A673 (cell line): ENCODE measurements at regions of chr10 and their contacts with region 1.

Region 1: GRCh38 chr10:72319416-72320254 is 35.1 kb downstream of the DNAJB12 start:
- DNase-seq: peak; percentile 93
- H3K4me3 ChIP-seq: peak overlapping the region; percentile 45
- H3K27ac ChIP-seq: peak overlapping the region; percentile 96
- H3K4me1 ChIP-seq: peaks cover 46% of the 10 kb centered on the region
- H3K27me3 ChIP-seq: no peaks in the 10 kb centered on the region
- CTCF ChIP-seq: no peak

Region 2: DNA sequence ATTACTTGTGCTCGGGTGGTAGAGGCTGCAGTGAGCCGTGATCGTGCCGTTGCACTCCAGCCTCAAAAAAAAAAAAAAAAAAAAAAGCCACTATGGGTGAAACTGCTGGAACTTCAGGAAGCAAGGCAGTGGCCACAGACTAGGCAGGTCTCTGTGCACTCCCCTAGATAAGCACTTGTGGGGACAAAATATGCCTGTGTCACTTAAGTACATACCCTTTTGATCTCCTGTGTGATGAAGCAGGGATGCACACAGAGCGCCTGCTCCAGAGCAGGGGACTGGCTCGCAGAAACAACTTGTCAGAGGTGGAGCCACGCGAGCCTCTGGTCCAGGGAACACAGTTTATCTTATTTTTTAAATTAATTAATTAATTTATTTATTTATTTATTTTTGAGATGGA is 425.7 kb before region 1 on chr10:
- CTCF ChIA-PET with region 1: interaction called, 14 read pairs
- POLR2A ChIA-PET with region 1: no interaction called
- intact Hi-C with region 1: no loop called
- DNase-seq: no peak
- H3K4me3 ChIP-seq: no peak overlapping the region
- H3K27ac ChIP-seq: no peak overlapping the region
- H3K4me1 ChIP-seq: peaks cover 3% of the 10 kb centered on the region
- H3K27me3 ChIP-seq: no peaks in the 10 kb centered on the region
- CTCF ChIP-seq: no peak

Region 3: DNA sequence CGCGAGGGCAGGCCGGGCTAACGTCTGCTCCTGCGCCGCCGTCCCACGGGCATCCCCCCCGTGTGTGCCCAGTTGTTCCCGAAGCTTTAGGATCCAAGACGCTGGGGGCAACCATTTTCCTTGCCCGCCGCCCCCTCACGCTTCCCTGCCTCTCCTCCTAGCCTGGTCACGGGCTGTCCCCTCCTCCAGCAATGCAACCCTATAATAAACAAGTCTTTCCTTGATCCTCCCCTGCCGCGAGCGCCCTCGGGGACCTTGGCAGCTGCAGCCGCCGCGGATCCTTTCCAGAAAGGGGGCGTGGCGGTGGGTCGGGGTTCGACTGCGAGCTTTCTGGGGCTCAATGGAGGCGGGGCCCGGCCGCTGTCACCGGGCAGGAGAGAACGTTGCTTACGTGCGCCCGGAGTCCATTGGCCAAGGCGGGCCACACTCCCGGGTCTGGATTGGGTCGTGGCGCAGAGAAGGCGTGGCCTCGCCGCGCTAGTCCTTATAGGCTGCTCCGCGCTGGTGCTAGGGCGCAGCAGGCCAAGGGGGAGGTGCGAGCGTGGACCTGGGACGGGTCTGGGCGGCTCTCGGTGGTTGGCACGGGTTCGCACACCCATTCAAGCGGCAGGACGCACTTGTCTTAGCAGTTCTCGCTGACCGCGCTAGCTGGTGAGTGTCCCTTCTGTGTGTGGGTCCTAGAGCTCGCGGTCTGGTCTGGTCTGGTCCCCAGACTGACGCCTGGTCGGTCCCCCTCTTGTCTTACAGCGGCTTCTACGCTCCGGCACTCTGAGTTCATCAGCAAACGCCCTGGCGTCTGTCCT is 46.0 kb before region 1 on chr10 and contains the start of gene DDIT4:
- CTCF ChIA-PET with region 1: interaction called, 3 read pairs
- POLR2A ChIA-PET with region 1: interaction called, 17 read pairs
- intact Hi-C with region 1: loop called (anchors 5 kb)
- DNase-seq: peak; percentile 99
- H3K4me3 ChIP-seq: peak within 1 kb of the TSS; percentile 86
- H3K27ac ChIP-seq: peak within 1 kb of the TSS; percentile 95
- H3K4me1 ChIP-seq: peaks cover 33% of the 10 kb centered on the region
- H3K27me3 ChIP-seq: no peaks in the 10 kb centered on the region
- CTCF ChIP-seq: no peak
- total RNA-seq, gene DDIT4: 20.7 and 39.6 TPM in 2 replicates

Region 4: DNA sequence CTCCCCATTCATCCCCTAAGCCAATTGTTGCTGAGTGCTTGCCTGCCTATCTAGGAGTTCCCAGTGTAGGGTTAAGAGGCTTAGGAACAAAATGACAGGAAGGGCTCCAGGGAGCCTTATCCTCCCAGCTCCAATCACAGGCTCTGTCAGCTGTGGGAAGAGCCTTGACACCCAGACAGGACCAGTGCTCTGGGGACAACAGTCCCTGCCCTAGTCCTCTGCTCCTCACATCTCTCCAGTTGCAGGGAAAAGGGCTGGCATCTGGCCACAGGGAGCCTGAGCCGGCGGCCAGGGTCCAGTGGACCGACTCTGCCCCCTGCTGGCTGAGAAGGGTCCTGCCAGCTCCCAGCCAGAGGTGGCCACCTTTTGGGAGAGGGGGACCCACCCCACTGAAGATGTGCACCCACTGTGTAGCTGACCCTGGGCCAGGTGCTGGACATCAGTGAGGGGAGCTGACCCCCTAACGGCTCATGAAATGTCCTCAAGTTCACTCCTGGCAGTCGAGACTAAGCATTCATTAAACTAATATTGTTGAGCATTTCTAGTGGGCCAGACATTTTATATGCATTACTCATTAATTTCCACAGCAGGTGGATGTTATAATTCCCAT is 17.5 kb after region 1 on chr10:
- CTCF ChIA-PET with region 1: interaction called, 11 read pairs
- POLR2A ChIA-PET with region 1: no interaction called
- intact Hi-C with region 1: no loop called
- DNase-seq: peak; percentile 77
- H3K4me3 ChIP-seq: no peak overlapping the region
- H3K27ac ChIP-seq: peak overlapping the region; percentile 47
- H3K4me1 ChIP-seq: peaks cover 19% of the 10 kb centered on the region
- H3K27me3 ChIP-seq: no peaks in the 10 kb centered on the region
- CTCF ChIP-seq: peak; percentile 97

Region 5: DNA sequence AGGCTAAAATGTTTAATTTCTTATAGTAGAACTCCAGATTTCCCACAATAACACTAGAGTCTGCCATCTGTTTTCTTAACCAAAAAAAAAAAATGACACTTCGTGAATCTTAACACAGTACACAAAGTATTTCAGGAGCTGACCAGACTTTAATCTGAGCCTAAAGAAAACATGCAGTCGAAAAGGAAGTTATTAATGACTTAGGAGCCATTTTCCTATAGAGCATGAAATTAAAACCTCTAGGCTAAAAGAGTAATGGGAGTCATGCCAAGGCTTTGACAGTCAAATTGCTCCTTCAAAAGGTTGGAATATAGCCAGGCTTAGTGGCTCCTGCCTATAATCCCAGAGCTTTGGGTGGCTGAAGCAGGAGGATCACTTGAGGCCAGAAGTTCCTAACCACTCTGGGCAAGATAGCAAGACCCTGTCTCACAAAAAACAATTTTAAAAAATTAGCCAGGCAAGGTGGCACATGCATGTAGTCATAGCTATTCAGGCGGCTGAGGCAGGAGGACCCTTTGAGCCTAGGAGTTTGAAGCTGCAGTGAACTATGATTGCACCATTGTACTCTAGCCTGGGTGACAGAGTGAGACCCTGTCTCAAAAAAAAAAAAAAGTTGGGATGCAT is 292.7 kb after region 1 on chr10:
- CTCF ChIA-PET with region 1: no interaction called
- POLR2A ChIA-PET with region 1: no interaction called
- intact Hi-C with region 1: no loop called
- DNase-seq: peak; percentile 98
- H3K4me3 ChIP-seq: peak overlapping the region; percentile 16
- H3K27ac ChIP-seq: no peak overlapping the region
- H3K4me1 ChIP-seq: peaks cover 14% of the 10 kb centered on the region
- H3K27me3 ChIP-seq: no peaks in the 10 kb centered on the region
- CTCF ChIP-seq: no peak